ENCODE measurements at regions of chr22 and their contacts with region 1.

Region 1: GRCh38 chr22:30423982-30424963 is 1.3 kb upstream of the MTFP1 start:
- DNase-seq: peak; percentile 99
- ATAC-seq: peak; percentile 85
- H3K4me3 ChIP-seq: peak overlapping the region; percentile 68 to 89 (median 68)
- H3K27ac ChIP-seq: peak overlapping the region; percentile 96
- H3K4me1 ChIP-seq: peaks cover 54% of the 10 kb centered on the region
- H3K27me3 ChIP-seq: no peaks in the 10 kb centered on the region
- CTCF ChIP-seq: no peak; the same call in 1 of the 2 replicates
- EP300 ChIP-seq: peak in 1 of 2 experiments; percentile 44; a peak in 1 of 4 replicates
- POLR2A ChIP-seq: peak; percentile 52 to 80
- RAD21 ChIP-seq: no peak

Region 2: DNA sequence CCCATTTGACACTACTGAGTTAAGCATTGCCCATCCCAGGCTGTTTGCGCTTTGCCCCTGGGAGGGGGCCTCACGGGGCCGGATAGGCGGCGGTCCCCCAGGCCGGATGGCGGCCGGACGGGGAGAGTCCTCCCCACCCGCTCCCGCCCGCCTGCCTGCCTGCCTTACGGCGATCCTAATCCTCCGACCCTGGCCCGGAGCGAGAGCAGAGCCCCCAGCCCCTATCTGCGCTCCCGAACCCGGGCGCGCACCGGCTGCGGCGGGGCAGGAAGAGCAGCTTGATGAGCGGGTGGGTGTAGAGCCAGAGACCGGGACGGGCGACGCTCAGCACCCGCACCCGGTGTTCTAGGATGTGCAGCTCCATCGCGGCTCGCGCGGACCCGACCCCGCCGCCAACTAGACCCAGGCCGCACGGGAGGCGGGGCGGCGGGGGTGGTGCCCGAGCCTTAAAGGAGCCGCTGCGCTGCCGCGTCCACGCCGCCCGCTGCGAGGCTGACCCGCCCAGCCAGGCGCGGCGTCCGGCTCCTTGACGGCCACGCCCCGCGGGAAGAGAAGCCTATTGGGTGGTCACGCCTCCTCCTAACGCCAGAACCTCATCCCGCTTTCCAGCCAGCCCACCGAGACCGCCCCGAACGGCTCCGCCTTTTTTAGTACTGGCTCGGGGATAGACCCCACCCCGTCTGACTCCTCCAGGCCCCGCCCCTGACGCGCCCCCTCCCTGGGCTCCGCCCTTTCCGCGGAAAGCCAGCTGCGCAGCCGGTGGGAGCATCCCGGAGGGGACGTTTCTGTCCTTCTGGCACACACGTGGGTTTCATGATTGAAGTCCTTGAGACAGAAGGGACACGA is 134.9 kb before region 1 on chr22 and contains the start of gene CASTOR1:
- CTCF ChIA-PET with region 1: no interaction called
- POLR2A ChIA-PET with region 1: interaction called, 11 read pairs
- in situ Hi-C with region 1: no loop called
- intact Hi-C with region 1: no loop called
- DNase-seq: peak; percentile 94
- ATAC-seq: peak; percentile 78
- H3K4me3 ChIP-seq: peak within 1 kb of the TSS; percentile 68 to 80 (median 72)
- H3K27ac ChIP-seq: no peak within 1 kb of the TSS
- H3K4me1 ChIP-seq: peaks cover 29% of the 10 kb centered on the region
- H3K27me3 ChIP-seq: no peaks in the 10 kb centered on the region; a peak in 1 of 5 replicates
- CTCF ChIP-seq: no peak
- EP300 ChIP-seq: no peak
- POLR2A ChIP-seq: peak in 1 of 2 experiments; percentile 62; a peak in 1 of 4 replicates
- RAD21 ChIP-seq: peak; percentile 5; the same call in 1 of the 2 replicates
- total RNA-seq, gene CASTOR1: 1.1 and 2.6 TPM in 2 replicates

Region 3: GRCh38 chr22:30356449-30357235 is 67.6 kb before region 1 on chr22 and contains the starts of genes CCDC157 and SF3A1:
- CTCF ChIA-PET with region 1: no interaction called
- POLR2A ChIA-PET with region 1: interaction called, 26 read pairs
- in situ Hi-C with region 1: no loop called
- intact Hi-C with region 1: no loop called
- DNase-seq: peak; percentile 88
- ATAC-seq: peak; percentile 97
- H3K4me3 ChIP-seq: peak within 1 kb of the TSS; percentile 89 to 99 (median 96)
- H3K27ac ChIP-seq: peak within 1 kb of the TSS; percentile 93
- H3K4me1 ChIP-seq: peaks cover 50% of the 10 kb centered on the region
- H3K27me3 ChIP-seq: no peaks in the 10 kb centered on the region; a peak in 2 of 5 replicates
- CTCF ChIP-seq: peak; percentile 19; the same call in 1 of the 2 replicates
- EP300 ChIP-seq: no peak
- POLR2A ChIP-seq: peak; percentile 94 to 96
- RAD21 ChIP-seq: no peak
- total RNA-seq, gene CCDC157: 0.98 and 1.6 TPM in 2 replicates
- total RNA-seq, gene SF3A1: 22.0 and 31.8 TPM in 2 replicates

Region 4: GRCh38 chr22:30386960-30387827 is 37.1 kb before region 1 on chr22 and contains the start of gene RNF215:
- CTCF ChIA-PET with region 1: interaction called, 43 read pairs
- POLR2A ChIA-PET with region 1: interaction called, 164 read pairs
- in situ Hi-C with region 1: loop called (anchors 5 kb)
- intact Hi-C with region 1: loop called (anchors 1 kb)
- DNase-seq: peak; percentile 54
- ATAC-seq: peak; percentile 71
- H3K4me3 ChIP-seq: peak within 1 kb of the TSS; percentile 49 to 71 (median 64); a peak in 5 of 6 replicates
- H3K27ac ChIP-seq: no peak within 1 kb of the TSS
- H3K4me1 ChIP-seq: peaks cover 21% of the 10 kb centered on the region
- H3K27me3 ChIP-seq: no peaks in the 10 kb centered on the region
- CTCF ChIP-seq: peak; percentile 89
- EP300 ChIP-seq: no peak
- POLR2A ChIP-seq: no peak; a peak in 1 of 4 replicates
- RAD21 ChIP-seq: peak; percentile 90
- total RNA-seq, gene RNF215: 2.4 and 5.3 TPM in 2 replicates

Region 5: GRCh38 chr22:30402028-30402765 is 22.1 kb before region 1 on chr22:
- CTCF ChIA-PET with region 1: no interaction called
- POLR2A ChIA-PET with region 1: interaction called, 164 read pairs
- in situ Hi-C with region 1: no loop called
- intact Hi-C with region 1: no loop called
- DNase-seq: no peak
- ATAC-seq: no peak
- H3K4me3 ChIP-seq: no peak overlapping the region
- H3K27ac ChIP-seq: no peak overlapping the region
- H3K4me1 ChIP-seq: peaks cover 72% of the 10 kb centered on the region
- H3K27me3 ChIP-seq: no peaks in the 10 kb centered on the region
- CTCF ChIP-seq: no peak
- EP300 ChIP-seq: no peak
- POLR2A ChIP-seq: no peak
- RAD21 ChIP-seq: no peak

Region 6: DNA sequence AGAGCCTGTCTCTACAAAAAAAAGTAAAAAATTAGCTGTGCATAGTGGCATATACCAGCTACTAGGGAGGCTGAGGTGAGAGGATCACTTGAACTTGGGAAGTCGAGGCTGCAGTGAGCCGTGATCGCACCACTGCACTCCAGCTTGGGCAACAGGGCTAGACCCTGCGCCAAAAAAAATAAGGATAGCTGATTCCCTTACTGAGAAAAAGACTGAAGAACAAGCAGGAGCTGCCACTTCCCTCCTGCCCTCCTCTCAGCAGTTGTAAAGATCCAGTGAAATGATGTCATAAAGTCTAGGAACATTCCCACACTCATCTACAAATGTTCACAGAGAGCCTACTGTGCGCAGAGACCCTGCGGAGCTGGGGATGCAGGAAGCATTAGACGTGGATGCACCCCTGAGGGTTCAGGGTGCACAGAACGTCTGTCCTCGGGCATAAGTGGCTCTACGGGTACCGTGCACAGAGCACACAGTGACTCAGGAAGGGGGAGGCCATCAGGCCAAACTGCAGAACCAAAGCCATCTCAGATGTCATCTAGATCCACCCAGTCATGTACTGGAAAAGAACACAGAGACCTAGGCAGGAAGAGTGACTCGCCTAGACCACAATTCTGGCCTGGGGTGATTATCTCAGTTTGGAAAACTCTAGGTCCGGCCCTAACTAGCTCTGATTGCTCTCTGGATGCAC is 15.7 kb before region 1 on chr22:
- CTCF ChIA-PET with region 1: no interaction called
- POLR2A ChIA-PET with region 1: interaction called, 65 read pairs
- in situ Hi-C with region 1: no loop called
- intact Hi-C with region 1: no loop called
- DNase-seq: peak; percentile 35
- ATAC-seq: no peak
- H3K4me3 ChIP-seq: no peak overlapping the region
- H3K27ac ChIP-seq: no peak overlapping the region
- H3K4me1 ChIP-seq: peaks cover 41% of the 10 kb centered on the region
- H3K27me3 ChIP-seq: no peaks in the 10 kb centered on the region
- CTCF ChIP-seq: no peak
- EP300 ChIP-seq: no peak
- POLR2A ChIP-seq: no peak
- RAD21 ChIP-seq: no peak

Region 7: DNA sequence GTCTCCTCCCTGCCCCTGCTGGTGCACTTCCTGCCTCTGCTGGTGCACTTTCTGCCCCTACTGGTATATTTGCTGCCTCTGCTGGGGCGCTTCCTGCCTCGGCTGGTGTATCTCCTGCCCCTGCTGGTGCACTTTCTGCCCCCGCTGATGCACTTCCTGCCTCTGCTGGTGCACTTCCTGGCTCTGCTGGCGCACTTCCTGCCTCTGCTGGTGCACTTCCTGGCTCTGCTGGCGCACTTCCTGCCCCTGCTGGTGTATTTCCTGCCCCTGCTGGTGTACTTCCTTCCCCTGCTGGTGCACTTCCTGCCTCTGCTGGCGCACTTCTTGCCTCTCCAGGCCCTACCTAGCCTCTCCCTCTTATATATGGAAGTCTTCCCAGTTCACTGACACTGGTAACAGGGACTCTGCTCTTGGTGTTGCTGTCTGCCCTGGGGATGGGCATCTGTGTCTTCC is 11.4 kb after region 1 on chr22:
- CTCF ChIA-PET with region 1: no interaction called
- POLR2A ChIA-PET with region 1: interaction called, 26 read pairs
- in situ Hi-C with region 1: no loop called
- intact Hi-C with region 1: no loop called
- DNase-seq: no peak
- ATAC-seq: no peak
- H3K4me3 ChIP-seq: peak overlapping the region in 1 of 3 experiments; percentile 41; a peak in 1 of 6 replicates
- H3K27ac ChIP-seq: no peak overlapping the region
- H3K4me1 ChIP-seq: peaks cover 42% of the 10 kb centered on the region
- H3K27me3 ChIP-seq: peaks cover 0 to 4% of the 10 kb centered on the region in 2 experiments; a peak in 3 of 5 replicates
- CTCF ChIP-seq: no peak
- EP300 ChIP-seq: no peak
- POLR2A ChIP-seq: no peak
- RAD21 ChIP-seq: no peak